GM18951 (cell line): ENCODE measurements at regions of chr2 and their contacts with region 1.

Region 1: GRCh38 chr2:24231461-24231881 is 56.6 kb downstream of the FAM228A start:
- POLR2A ChIP-seq: no peak

Region 2: GRCh38 chr2:24382363-24383073 is 151.0 kb after region 1 on chr2:
- in situ Hi-C with region 1: loop called (anchors 10 kb)
- POLR2A ChIP-seq: no peak